GM10248 (cell line): ENCODE measurements at regions of chr5 and their contacts with region 1.

Region 1: DNA sequence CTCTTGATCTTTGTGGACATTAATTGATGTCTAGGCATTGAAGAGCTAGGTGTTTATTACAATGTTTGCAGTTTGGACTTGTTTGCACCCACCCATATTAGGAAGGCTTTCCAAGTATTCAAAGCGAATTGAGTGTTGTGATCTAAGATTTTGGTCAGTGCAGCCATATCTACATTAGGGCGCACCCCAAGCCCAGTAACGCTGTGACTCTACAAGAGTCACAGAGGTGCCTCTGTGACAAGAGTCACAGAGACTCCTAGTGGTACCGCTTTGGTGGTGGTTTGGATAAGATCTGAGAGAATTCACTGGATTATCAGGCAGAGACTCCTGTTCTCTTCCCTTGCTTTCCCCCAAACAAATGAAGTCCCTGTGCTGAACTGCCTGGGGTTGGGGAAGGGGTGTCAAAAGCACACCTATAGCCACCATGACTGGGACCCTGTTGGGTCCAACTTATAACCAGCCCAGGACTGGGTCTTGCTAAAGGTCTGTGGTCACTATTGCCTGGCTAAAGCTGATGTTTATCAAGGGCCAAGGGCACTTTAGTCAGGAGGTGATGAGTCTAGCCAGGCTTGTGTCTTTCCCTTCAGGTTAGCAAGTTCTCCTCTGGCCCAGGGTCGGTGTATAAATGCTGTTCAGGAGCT is 114.1 kb upstream of the RIOK2 start:
- DNase-seq: peak; percentile 39
- CTCF ChIP-seq: peak; percentile 31

Region 2: GRCh38 chr5:97243353-97243752 is 53.8 kb before region 1 on chr5:
- CTCF ChIA-PET with region 1: no interaction called
- POLR2A ChIA-PET with region 1: no interaction called
- DNase-seq: no peak
- CTCF ChIP-seq: no peak

Region 3: DNA sequence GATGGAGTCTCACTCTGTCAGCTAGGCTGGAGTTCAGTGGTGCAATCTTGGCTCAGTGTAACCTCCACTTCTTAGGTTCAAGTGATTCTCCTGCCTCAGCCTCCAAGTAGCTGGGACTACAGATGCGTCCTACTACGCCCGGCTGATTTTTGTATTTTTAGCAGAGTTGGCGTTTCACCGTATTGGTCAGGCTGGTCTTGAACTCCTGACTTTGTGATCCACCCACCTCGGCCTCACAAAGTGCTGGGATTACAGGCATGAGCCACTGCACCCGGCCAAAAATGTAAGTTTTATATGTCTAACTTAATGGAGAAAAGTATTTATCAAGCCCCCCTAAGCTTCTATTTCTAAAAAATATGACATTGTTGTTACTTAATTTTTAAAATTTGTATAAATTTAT is 15.9 kb before region 1 on chr5:
- CTCF ChIA-PET with region 1: interaction called, 12 read pairs
- POLR2A ChIA-PET with region 1: no interaction called
- DNase-seq: no peak
- CTCF ChIP-seq: no peak

Region 4: DNA sequence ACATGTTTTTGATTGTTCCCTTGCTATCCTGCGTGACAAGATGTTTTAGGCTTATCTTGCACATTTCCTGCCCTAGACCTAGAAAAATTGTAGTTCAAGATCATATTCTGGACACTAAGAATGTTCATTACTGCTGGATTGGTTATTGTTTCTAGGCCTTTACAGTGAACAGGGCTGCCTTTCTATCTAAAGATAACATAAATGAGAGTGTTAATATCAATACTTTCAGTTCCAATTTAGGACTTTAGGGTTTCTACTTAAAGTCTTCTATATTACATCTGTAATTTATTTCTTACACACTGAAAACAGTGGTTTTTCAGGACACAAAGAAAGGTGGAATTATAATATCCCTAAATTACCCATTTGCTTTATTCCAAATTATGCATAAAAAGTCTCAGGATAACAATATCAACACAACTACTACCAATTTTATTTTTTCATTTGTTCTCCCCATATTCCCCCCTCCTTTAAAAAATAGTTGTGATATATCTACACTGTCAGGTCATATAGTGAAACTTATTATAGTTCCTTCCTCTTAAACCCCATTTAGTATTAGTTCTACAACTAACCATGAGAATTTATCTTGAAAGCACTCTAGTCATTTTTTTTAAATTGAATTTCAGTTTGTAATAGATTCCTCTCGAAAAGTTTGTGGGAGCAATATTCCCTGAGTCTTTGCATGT is 179.8 kb after region 1 on chr5:
- CTCF ChIA-PET with region 1: no interaction called
- POLR2A ChIA-PET with region 1: no interaction called
- DNase-seq: no peak
- CTCF ChIP-seq: no peak